Activated CD4-positive, alpha-beta memory T cell treated with anti-CD3 and anti-CD28 coated beads, Interleukin-2, amount 10 ng/mL, durations not matched to agents 7 days and 5 days (primary cell): ENCODE measurements at regions of chr11 and their contacts with region 1.

Region 1: DNA sequence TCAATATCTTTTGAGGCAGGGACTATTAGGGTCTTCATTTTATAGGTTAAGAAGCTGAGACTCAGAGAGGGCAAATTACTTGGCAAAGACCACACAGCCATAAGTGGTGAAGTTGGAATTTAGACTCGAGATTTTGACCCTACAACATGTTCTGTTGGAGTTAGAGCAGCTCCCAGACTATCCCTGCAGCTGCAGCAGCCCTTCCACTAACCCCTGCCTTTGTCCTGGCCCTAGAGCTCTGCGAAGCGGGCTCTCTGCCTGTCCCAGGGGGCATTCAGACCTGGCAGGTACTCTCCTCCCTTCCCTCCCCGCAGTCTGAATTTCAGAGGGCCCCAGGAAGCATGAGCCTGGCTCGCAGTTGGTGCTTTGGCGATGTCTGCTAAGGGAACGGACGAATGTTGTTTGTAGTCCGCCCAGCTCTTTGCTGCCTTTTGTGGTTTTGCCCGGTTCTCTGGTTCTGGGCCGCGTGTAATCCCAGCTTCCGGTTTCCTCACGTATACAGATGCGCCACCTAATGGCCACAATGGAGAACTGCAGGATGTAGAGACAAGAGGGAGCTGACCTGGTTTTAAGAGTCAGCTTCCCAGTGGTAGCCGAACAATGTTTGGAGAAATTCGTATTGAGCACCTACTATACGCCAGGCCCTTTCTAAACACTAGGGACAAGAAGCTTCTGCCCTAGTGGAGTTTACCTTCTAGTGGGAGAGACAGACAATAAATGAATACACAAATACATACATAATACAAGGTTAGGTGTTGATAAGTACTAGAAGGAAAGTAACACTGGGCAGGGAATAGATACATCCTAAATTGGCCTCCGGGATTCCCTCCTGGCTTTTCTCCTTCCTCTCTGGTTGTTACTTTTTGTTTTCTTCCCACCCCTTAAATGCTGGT is 125.2 kb downstream of the ST3GAL4 start:
- DNase-seq: peak; percentile 77
- H3K4me3 Mint-ChIP-seq: peak overlapping the region; percentile 24
- H3K27ac Mint-ChIP-seq: peak overlapping the region; percentile 27
- H3K4me1 Mint-ChIP-seq: peaks cover 23% of the 10 kb centered on the region
- H3K27me3 Mint-ChIP-seq: peaks cover 2% of the 10 kb centered on the region

Region 2: DNA sequence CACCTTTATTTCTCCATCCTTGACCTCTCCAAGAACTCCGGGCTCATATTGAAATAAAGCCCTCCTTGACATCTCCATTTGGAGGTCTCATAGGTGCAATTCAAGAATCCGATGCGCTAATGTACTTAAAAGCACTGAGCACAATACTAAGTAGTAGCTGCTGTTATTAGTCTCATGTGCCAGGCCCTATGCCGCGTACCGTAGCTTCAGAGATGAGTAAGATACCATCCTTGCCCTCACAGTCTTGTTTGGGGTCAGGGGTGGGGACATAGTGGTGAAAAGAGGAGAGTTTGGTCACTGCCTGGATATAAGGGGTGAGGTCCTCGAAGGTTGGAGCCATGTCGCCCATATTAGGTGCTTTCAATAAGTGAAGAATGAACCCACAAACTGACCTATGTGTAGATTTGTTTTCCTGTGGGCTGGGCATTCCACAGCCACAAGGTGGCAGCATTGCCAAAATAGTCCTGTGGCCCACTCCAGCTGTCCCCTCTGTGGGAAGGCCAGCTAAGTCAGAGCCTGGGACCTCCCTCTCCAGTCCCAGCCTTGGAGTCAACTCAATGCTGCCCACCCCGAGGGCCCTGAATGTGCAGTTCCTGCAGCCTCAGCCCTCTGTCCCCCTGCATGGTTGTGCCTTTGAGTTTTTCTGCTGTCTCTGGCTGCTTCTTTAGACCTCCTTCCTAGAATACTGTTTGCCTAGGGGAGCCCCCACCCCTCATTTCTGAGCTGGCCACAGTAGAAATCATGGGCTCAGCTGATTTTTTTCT is 170.2 kb before region 1 on chr11:
- CTCF ChIA-PET with region 1: interaction called, 57 read pairs
- POLR2A ChIA-PET with region 1: interaction called, 4 read pairs
- DNase-seq: peak; percentile 65
- H3K4me3 Mint-ChIP-seq: no peak overlapping the region
- H3K27ac Mint-ChIP-seq: no peak overlapping the region
- H3K4me1 Mint-ChIP-seq: peaks cover 27% of the 10 kb centered on the region
- H3K27me3 Mint-ChIP-seq: no peaks in the 10 kb centered on the region

Region 3: DNA sequence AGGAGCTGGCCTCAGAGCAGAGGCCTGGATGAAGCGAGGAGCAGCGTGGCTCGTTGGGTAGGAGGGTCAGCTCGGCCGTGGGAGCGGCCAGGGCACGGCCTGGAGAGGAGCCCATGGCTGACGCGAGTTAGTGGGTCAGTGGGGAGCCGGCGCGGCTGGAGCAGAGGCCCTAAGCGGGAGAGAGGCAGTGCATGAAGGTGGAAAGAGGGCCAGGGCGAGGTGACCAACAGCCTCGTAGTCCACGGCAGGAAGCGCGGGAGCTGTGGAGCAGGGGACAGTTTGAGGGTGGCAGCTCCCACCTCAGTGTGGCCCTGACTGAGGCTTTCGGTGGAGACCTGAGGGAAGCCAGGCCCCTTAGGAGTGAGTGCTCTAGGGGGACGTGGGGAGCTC is 152.7 kb before region 1 on chr11:
- CTCF ChIA-PET with region 1: no interaction called
- POLR2A ChIA-PET with region 1: no interaction called
- DNase-seq: no peak
- H3K4me3 Mint-ChIP-seq: no peak overlapping the region
- H3K27ac Mint-ChIP-seq: no peak overlapping the region
- H3K4me1 Mint-ChIP-seq: peaks cover 6% of the 10 kb centered on the region
- H3K27me3 Mint-ChIP-seq: no peaks in the 10 kb centered on the region

Region 4: DNA sequence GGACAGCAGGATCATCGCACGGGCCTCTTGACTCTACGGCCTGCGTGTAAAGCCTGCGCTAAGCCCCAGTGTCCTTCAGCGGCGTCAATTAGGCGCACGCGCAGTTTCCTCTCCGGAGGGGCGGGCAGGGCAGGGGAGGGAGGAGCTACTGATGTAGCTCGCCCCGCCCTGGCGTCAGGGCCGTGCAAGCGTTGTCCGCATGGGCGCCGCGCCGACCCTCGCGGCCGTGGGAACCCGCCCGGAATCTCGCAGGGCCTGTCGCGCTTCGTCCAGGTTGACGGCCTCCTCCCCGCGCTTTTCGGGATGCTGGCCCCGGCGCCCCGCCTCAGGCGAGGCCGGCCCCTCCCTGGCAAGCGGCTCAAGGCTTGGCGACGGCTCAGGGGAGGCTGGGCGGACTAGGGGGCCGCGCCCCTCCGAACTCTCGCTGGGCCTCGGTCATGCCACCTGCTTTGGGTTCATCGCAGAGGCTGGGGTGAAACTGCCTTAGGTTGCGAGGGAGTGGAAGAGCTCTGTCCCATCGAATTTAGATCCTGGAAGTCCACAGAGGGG is 64.0 kb before region 1 on chr11:
- CTCF ChIA-PET with region 1: interaction called, 12 read pairs
- POLR2A ChIA-PET with region 1: no interaction called
- DNase-seq: peak; percentile 77
- H3K4me3 Mint-ChIP-seq: no peak overlapping the region
- H3K27ac Mint-ChIP-seq: no peak overlapping the region
- H3K4me1 Mint-ChIP-seq: peaks cover 20% of the 10 kb centered on the region
- H3K27me3 Mint-ChIP-seq: peaks cover 4% of the 10 kb centered on the region

Region 5: GRCh38 chr11:126440792-126441514 is 39.7 kb before region 1 on chr11:
- CTCF ChIA-PET with region 1: interaction called, 136 read pairs
- POLR2A ChIA-PET with region 1: interaction called, 5 read pairs
- DNase-seq: peak; percentile 75
- H3K4me3 Mint-ChIP-seq: no peak overlapping the region
- H3K27ac Mint-ChIP-seq: no peak overlapping the region
- H3K4me1 Mint-ChIP-seq: peaks cover 5% of the 10 kb centered on the region
- H3K27me3 Mint-ChIP-seq: peaks cover 11% of the 10 kb centered on the region